Left colon (tissue), 2 donors: ENCODE measurements at regions of chr4 and their contacts with region 1.

Region 1: GRCh38 chr4:76430519-76431388 is 4.3 kb upstream of the SHROOM3 start:
- DNase-seq: no peak
- ATAC-seq: peak; percentile 66

Region 2: GRCh38 chr4:76504613-76505465 is 74.1 kb after region 1 on chr4:
- intact Hi-C with region 1: loop called (anchors 2 to 10 kb)
- DNase-seq: no peak
- ATAC-seq: peak; percentile 62

Region 3: GRCh38 chr4:76758290-76758882 is 327.6 kb after region 1 on chr4:
- intact Hi-C with region 1: loop called in 1 of 2 experiments (anchors 10 kb)
- DNase-seq: no peak
- ATAC-seq: peak; percentile 71

Region 4: GRCh38 chr4:77564231-77564630 is 1133.5 kb after region 1 on chr4:
- intact Hi-C with region 1: no loop called
- DNase-seq: peak; percentile 15 to 67
- ATAC-seq: peak; percentile 78